ENCODE measurements at regions of chr1 and their contacts with region 1.

Region 1: DNA sequence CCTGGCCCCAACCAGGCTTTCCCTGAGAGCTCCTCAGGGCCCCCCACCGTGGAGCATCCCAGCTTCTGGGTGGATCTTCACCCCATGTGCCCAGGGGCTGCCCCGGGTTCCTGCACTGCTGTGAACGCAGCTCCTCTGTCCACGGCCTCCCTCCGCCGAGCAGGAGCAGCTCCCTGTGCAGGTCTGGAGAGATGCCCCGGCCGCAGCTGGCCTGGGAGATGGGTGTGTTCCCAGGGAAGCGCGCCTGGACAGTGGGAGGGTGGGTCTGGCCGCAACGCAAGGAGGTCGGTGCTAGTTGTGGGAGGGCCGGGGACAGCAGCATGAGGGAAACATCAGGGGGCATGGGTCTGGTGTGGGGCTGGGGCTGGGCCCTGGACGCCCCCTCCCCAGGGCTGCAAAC is 71.3 kb downstream of the MORN1 start:
- DNase-seq: no peak
- ATAC-seq: no peak
- H3K4me3 ChIP-seq: no peak overlapping the region
- H3K4me3 Mint-ChIP-seq: no peak overlapping the region
- H3K27ac ChIP-seq: no peak overlapping the region
- H3K27ac Mint-ChIP-seq: no peak overlapping the region
- H3K4me1 ChIP-seq: peaks cover 16 to 59% of the 10 kb centered on the region in 2 experiments
- H3K4me1 Mint-ChIP-seq: peaks cover 5 to 11% (median 10%) of the 10 kb centered on the region in 3 donors
- H3K27me3 ChIP-seq: peaks cover 0 to 41% of the 10 kb centered on the region in 2 experiments
- H3K27me3 Mint-ChIP-seq: no peaks in the 10 kb centered on the region

Region 2: DNA sequence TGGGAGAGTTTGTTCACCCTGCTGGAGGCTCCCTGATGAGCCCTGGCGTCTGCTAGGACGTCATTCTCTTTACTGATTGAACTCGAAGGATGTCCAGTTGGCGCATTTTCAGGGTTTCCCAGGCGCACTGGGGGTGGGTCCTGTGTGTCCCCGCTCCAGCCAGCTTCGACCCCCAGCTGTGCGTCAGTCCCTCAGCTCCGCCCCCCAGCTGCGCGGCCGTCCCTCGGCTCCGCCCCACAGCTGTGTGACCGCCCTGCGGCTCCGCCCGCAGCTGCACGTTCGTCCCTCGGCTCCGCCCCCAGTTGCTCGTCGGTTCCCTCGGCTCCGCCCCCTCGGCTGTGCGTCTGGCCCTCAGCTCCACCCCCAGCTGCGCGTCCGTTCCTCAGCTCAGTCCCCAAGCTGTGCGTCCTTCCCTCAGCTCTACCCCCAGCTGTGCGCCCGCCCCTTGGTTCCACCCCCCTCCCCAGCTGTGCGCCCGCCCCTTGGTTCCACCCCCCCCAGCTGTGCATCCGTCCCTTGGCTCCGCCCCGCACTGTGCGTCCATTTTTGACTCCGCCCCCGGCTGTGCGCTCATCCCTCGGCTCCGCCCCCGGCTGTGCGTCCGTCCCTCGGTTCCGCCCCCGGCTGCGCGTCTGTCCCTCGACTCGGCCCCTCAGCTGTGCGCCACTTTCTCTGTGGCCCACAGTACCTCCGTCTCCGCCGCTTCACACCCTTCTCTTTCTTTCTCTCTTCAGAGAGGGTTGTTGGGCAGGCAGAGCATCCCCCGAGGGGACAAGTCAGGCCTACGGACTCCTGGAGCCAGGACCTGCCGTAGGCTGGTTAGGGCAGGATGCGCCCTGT is 186.7 kb before region 1 on chr1:
- CTCF ChIA-PET with region 1: no interaction called
- POLR2A ChIA-PET with region 1: no interaction called
- DNase-seq: peak; percentile 91 to 99 (median 96)
- ATAC-seq: peak; percentile 88 to 93 (median 90)
- H3K4me3 ChIP-seq: peak overlapping the region; percentile 61 to 66
- H3K4me3 Mint-ChIP-seq: peak overlapping the region; percentile 72 to 87 (median 78)
- H3K27ac ChIP-seq: peak overlapping the region; percentile 80
- H3K27ac Mint-ChIP-seq: peak overlapping the region; percentile 70 to 84
- H3K4me1 ChIP-seq: peaks cover 13 to 30% of the 10 kb centered on the region in 2 experiments
- H3K4me1 Mint-ChIP-seq: peaks cover 12 to 26% (median 25%) of the 10 kb centered on the region in 3 donors
- H3K27me3 ChIP-seq: peaks cover 0 to 3% of the 10 kb centered on the region in 2 experiments
- H3K27me3 Mint-ChIP-seq: no peaks in the 10 kb centered on the region

Region 3: GRCh38 chr1:2279210-2279639 is 40.8 kb before region 1 on chr1:
- CTCF ChIA-PET with region 1: no interaction called
- POLR2A ChIA-PET with region 1: no interaction called
- DNase-seq: no peak
- ATAC-seq: peak in 2 of 4 experiments; percentile 3 to 26
- H3K4me3 ChIP-seq: no peak overlapping the region
- H3K4me3 Mint-ChIP-seq: peak overlapping the region in 1 of 3 donors; percentile 61
- H3K27ac ChIP-seq: no peak overlapping the region
- H3K27ac Mint-ChIP-seq: peak overlapping the region in 1 of 2 donors; percentile 6
- H3K4me1 ChIP-seq: peaks cover 14 to 69% of the 10 kb centered on the region in 2 experiments
- H3K4me1 Mint-ChIP-seq: peaks cover 44 to 55% (median 50%) of the 10 kb centered on the region in 3 donors
- H3K27me3 ChIP-seq: no peaks in the 10 kb centered on the region
- H3K27me3 Mint-ChIP-seq: no peaks in the 10 kb centered on the region

Region 4: GRCh38 chr1:2347951-2348663 is 28.1 kb after region 1 on chr1:
- CTCF ChIA-PET with region 1: no interaction called
- POLR2A ChIA-PET with region 1: no interaction called
- DNase-seq: no peak
- ATAC-seq: no peak
- H3K4me3 ChIP-seq: no peak overlapping the region
- H3K4me3 Mint-ChIP-seq: no peak overlapping the region
- H3K27ac ChIP-seq: no peak overlapping the region
- H3K27ac Mint-ChIP-seq: no peak overlapping the region
- H3K4me1 ChIP-seq: no peaks in the 10 kb centered on the region
- H3K4me1 Mint-ChIP-seq: no peaks in the 10 kb centered on the region
- H3K27me3 ChIP-seq: peaks cover 0 to 3% of the 10 kb centered on the region in 2 experiments
- H3K27me3 Mint-ChIP-seq: no peaks in the 10 kb centered on the region

Region 5: DNA sequence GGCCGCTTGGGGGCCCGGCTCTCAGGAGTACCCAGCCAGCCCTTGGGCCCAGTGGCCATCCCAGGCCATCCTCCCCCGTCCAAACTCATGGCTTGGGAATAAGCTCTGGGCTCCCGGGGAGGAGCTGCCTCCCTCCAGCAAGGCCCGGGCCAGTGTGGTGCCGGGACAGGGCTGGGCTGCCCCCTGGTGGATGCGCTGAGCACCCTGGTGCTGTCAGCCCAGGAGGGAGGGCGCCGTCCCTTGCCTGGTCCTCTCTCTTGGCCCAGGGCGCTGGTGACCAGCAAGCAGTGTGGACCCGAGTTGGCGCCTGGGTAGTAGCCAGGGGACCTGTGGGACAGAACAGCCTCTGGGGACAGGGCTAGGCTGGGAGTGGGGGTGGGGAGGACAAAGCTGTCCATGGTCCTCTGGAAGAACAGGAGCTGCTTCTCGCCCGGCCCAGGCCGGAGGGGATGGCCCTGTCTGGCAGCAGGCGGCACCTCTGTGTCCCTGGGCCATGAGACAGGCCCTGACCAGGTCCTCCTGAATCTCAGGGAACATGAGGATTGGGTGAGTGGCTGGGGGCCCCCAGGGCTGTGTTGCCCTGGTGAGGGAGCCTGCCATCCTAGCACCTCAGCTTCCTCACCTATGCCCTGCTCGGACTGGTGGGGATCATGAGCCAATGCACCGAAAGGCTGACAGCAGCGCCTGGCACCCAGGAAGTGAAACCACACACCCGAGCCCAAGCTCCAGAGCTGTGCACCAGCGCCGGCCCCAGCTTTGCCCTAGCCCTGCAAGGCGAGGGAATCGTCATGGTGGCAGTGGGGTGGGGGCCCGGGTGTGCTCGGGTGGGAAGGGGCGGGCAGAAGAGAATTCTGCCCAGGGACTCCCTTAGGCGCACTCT is 62.0 kb after region 1 on chr1:
- CTCF ChIA-PET with region 1: interaction called in 1 of 2 experiments, 5 read pairs
- POLR2A ChIA-PET with region 1: interaction called in 1 of 2 experiments, 10 read pairs
- DNase-seq: peak; percentile 43 to 85 (median 67)
- ATAC-seq: peak; percentile 92 to 97 (median 94)
- H3K4me3 ChIP-seq: no peak overlapping the region
- H3K4me3 Mint-ChIP-seq: no peak overlapping the region
- H3K27ac ChIP-seq: no peak overlapping the region
- H3K27ac Mint-ChIP-seq: no peak overlapping the region
- H3K4me1 ChIP-seq: peaks cover 4 to 14% of the 10 kb centered on the region in 2 experiments
- H3K4me1 Mint-ChIP-seq: peaks cover 0 to 2% (median 0%) of the 10 kb centered on the region in 3 donors
- H3K27me3 ChIP-seq: no peaks in the 10 kb centered on the region
- H3K27me3 Mint-ChIP-seq: no peaks in the 10 kb centered on the region